Endothelial cell of umbilical vein (primary cell): ENCODE measurements at regions of chr1 and their contacts with region 1.

Region 1: DNA sequence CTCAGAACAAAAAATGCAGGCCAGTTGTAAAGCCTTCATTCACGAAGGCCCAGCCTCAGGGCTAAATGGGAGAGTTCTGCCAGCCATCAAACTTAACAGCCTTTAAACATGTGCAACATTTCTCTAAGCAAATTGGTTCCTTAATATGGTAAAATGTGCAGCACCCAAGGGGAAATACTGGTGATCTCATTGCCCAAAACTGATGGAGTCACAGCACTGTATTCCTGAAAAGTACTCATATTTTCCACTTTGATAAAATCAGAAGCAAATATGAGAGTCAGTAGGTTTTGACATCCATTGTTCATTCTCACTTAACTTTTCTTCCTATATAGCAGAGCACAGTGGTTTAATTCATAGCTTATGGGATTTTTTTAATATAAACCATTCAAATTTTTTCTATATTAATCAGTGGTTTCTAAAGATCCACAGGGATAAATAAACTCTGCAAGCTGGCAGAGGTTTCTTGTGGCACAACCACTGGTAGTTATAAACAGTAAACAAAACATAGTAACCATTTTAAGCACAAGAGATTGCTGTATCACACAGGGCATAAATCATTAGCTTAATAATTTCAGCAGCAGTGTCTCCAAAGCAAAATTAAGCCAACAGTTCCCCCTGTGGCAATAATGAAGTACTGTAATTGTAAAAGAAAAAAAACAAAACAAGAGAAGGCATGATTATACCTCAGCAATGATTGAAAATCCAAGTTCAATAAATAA is 106.9 kb upstream of the LYPLAL1 start:
- DNase-seq: peak; percentile 75
- H3K4me3 ChIP-seq: no peak overlapping the region
- H3K27ac ChIP-seq: no peak overlapping the region
- H3K4me1 ChIP-seq: no peaks in the 10 kb centered on the region
- H3K27me3 ChIP-seq: no peaks in the 10 kb centered on the region
- CTCF ChIP-seq: peak; percentile 37 to 39
- POLR2A ChIP-seq: no peak

Region 2: GRCh38 chr1:218330043-218330623 is 736.7 kb before region 1 on chr1:
- CTCF ChIA-PET with region 1: interaction called, 55 read pairs
- POLR2A ChIA-PET with region 1: no interaction called
- dilution Hi-C with region 1: no loop called
- intact Hi-C with region 1: loop called (anchors 1 kb)
- DNase-seq: peak; percentile 64
- H3K4me3 ChIP-seq: no peak overlapping the region
- H3K27ac ChIP-seq: no peak overlapping the region
- H3K4me1 ChIP-seq: peaks cover 2% of the 10 kb centered on the region
- H3K27me3 ChIP-seq: no peaks in the 10 kb centered on the region
- CTCF ChIP-seq: peak; percentile 20 to 32
- POLR2A ChIP-seq: no peak

Region 3: DNA sequence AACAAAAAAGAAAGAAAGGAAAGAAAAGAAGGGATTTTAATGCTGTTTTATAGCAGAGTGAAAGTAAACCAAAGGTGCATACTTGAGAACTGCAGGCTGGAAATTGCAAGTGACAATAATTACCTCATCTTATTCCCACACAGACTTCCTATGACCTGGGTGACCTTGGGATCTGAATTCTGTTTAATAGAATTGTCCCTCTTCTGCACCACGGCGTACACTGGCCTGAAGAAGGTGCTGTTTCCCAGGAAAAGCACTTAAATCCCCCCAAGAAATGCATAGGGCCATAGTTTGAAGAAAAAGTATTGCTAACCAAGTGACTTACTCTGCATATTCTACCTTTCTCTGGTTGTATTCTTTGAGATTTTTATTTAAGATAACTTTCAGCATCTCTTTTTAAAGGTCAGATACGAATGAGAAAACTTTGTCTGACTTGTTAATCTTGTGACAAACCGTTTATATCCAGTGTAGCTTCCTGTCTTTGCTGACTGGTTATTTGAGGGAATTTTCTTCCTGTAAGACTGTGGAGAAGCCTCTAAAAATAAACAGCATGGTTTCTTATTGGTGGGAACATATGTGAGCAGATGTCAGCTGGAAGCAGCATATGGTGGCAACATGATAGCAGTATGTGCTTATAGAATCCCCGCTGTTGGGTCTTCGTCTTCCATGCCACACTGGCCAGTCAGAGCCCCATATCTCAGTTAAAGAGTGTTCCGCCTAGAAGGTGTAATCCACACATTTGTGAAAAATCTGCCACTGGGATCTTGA is 705.3 kb before region 1 on chr1:
- CTCF ChIA-PET with region 1: interaction called, 62 read pairs
- POLR2A ChIA-PET with region 1: no interaction called
- dilution Hi-C with region 1: no loop called
- intact Hi-C with region 1: loop called (anchors 1 kb)
- DNase-seq: peak; percentile 81
- H3K4me3 ChIP-seq: no peak overlapping the region
- H3K27ac ChIP-seq: no peak overlapping the region
- H3K4me1 ChIP-seq: peaks cover 6% of the 10 kb centered on the region
- H3K27me3 ChIP-seq: no peaks in the 10 kb centered on the region
- CTCF ChIP-seq: peak; percentile 55 to 70
- POLR2A ChIP-seq: no peak

Region 4: GRCh38 chr1:218616681-218617080 is 450.1 kb before region 1 on chr1:
- CTCF ChIA-PET with region 1: interaction called, 3 read pairs
- POLR2A ChIA-PET with region 1: no interaction called
- dilution Hi-C with region 1: no loop called
- intact Hi-C with region 1: loop called (anchors 10 kb)
- DNase-seq: peak; percentile 13
- H3K4me3 ChIP-seq: no peak overlapping the region
- H3K27ac ChIP-seq: no peak overlapping the region
- H3K4me1 ChIP-seq: peaks cover 9% of the 10 kb centered on the region
- H3K27me3 ChIP-seq: no peaks in the 10 kb centered on the region
- CTCF ChIP-seq: no peak
- POLR2A ChIP-seq: no peak

Region 5: GRCh38 chr1:219027146-219027673 is 39.6 kb before region 1 on chr1:
- CTCF ChIA-PET with region 1: no interaction called
- POLR2A ChIA-PET with region 1: no interaction called
- dilution Hi-C with region 1: no loop called
- intact Hi-C with region 1: no loop called
- DNase-seq: no peak
- H3K4me3 ChIP-seq: no peak overlapping the region
- H3K27ac ChIP-seq: no peak overlapping the region
- H3K4me1 ChIP-seq: no peaks in the 10 kb centered on the region
- H3K27me3 ChIP-seq: no peaks in the 10 kb centered on the region
- CTCF ChIP-seq: no peak
- POLR2A ChIP-seq: no peak

Region 6: GRCh38 chr1:219041141-219041540 is 25.6 kb before region 1 on chr1:
- CTCF ChIA-PET with region 1: interaction called, 10 read pairs
- POLR2A ChIA-PET with region 1: no interaction called
- dilution Hi-C with region 1: no loop called
- intact Hi-C with region 1: no loop called
- DNase-seq: no peak
- H3K4me3 ChIP-seq: no peak overlapping the region
- H3K27ac ChIP-seq: no peak overlapping the region
- H3K4me1 ChIP-seq: no peaks in the 10 kb centered on the region
- H3K27me3 ChIP-seq: no peaks in the 10 kb centered on the region
- CTCF ChIP-seq: no peak
- POLR2A ChIP-seq: no peak

Region 7: DNA sequence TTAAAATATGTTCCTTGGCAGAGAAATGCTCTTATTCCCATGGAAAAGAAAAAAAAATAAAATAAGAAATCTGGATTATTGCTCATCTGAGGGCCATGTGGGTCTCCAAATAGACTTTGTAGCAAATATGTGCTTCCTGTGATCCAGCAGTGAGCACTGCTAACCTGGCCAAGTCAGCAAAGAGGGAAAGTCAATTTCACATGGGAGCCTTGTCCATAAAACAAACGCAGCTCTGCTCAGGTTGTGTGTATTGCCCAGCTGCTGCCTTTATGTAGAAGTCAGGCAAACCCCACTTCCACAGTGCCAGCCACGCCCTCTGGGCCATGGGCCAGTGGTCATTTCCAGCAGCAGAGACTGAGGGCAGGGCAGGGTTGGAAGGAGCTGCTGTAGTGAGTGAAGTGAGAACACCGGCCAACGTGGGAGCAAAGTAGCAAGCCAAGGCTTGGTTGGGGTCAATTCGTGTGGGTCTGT is 281.2 kb after region 1 on chr1:
- CTCF ChIA-PET with region 1: no interaction called
- POLR2A ChIA-PET with region 1: no interaction called
- dilution Hi-C with region 1: no loop called
- intact Hi-C with region 1: no loop called
- DNase-seq: no peak
- H3K4me3 ChIP-seq: no peak overlapping the region
- H3K27ac ChIP-seq: no peak overlapping the region
- H3K4me1 ChIP-seq: no peaks in the 10 kb centered on the region
- H3K27me3 ChIP-seq: no peaks in the 10 kb centered on the region
- CTCF ChIP-seq: no peak
- POLR2A ChIP-seq: no peak

Region 8: DNA sequence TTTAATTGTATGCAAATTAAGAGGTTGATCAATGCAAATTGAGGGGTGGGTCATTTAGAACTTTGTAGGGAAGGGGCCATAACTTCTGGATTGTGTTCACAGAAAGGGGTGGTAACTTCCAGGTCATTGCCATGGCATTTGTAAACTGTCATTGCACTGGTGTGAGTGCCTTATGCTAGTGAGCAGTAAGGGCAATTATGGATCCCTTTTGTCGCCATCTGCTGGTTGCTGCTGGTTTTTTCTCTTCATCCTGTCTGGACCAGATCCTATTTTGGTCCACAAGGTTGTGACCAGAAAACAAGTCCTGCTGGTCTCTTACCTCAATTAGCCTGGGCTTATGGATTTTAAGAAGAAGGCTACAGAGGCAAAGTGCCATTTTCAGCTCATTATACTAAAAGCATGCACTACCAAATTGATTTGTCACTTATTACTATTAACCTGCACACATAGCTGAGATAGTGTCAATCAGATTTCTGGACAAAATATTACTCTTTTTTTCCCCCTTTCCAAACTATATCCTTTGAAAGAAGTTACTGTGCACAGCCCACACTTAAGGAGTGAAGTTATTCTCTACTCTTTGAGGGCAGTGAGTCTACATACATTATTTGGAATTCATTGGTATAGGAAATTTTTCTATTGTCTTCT is 349.9 kb after region 1 on chr1:
- CTCF ChIA-PET with region 1: interaction called, 3 read pairs
- POLR2A ChIA-PET with region 1: no interaction called
- dilution Hi-C with region 1: no loop called
- intact Hi-C with region 1: loop called (anchors 1 kb)
- DNase-seq: peak; percentile 71
- H3K4me3 ChIP-seq: no peak overlapping the region
- H3K27ac ChIP-seq: no peak overlapping the region
- H3K4me1 ChIP-seq: no peaks in the 10 kb centered on the region
- H3K27me3 ChIP-seq: no peaks in the 10 kb centered on the region
- CTCF ChIP-seq: peak; percentile 62 to 75
- POLR2A ChIP-seq: no peak

Region 9: GRCh38 chr1:219812491-219813203 is 745.9 kb after region 1 on chr1:
- CTCF ChIA-PET with region 1: interaction called, 7 read pairs
- POLR2A ChIA-PET with region 1: no interaction called
- dilution Hi-C with region 1: no loop called
- intact Hi-C with region 1: loop called (anchors 10 kb)
- DNase-seq: peak; percentile 26
- H3K4me3 ChIP-seq: no peak overlapping the region
- H3K27ac ChIP-seq: no peak overlapping the region
- H3K4me1 ChIP-seq: no peaks in the 10 kb centered on the region
- H3K27me3 ChIP-seq: peaks cover 0 to 6% of the 10 kb centered on the region in 2 experiments
- CTCF ChIP-seq: peak; percentile 49 to 57
- POLR2A ChIP-seq: no peak